Endothelial cell of umbilical vein (primary cell): ENCODE measurements at regions of chr5 and their contacts with region 1.

Region 1: GRCh38 chr5:169980418-169981053 is at the start of gene INSYN2B:
- DNase-seq: peak; percentile 96
- H3K4me3 ChIP-seq: peak within 1 kb of the TSS; percentile 47 to 99 (median 97)
- H3K27ac ChIP-seq: peak within 1 kb of the TSS; percentile 97
- H3K4me1 ChIP-seq: peaks cover 41% of the 10 kb centered on the region
- H3K27me3 ChIP-seq: no peaks in the 10 kb centered on the region
- CTCF ChIP-seq: peak; percentile 65 to 66
- POLR2A ChIP-seq: peak; percentile 59
- total RNA-seq, gene INSYN2B: 8.2 and 9.9 TPM in 2 replicates

Region 2: DNA sequence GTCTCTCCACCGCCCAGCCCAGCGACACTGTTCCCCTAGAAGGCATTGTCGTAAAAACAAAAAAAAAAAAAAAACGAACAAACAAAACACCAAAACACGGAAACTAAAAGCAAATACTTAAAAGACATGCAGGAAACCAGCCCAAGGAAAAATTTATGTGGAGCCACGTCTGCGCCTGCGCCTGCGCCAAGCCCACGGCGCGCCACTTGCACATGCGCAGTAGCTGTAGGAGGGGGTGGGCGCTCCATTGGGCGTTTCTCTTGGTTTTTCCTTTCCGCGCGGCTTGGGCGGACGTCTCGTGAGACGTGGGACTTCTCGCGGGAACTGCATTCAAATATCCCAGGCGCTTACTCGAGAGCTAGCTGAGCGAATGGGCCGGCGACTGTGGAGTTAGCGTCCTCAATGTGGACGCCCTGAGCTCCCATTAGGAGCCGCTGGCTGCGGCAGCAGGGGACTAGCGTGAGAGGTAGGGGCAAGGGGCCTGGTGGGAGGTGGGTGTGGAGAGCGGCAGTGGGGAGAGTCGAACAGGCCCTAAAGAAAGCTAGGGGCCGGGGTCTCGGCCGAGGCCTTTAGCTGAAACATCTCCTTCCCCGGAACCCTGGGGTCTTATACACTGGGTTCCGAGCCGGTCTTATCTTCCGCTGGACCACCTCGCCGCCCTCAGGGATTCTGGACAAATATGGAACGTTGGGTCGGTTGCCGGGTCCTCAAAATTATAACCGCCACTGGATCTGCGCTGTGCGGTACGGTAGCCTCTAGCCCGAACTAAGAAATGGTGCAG is 396.9 kb before region 1 on chr5 and contains the start of gene SPDL1:
- CTCF ChIA-PET with region 1: interaction called, 33 read pairs
- POLR2A ChIA-PET with region 1: interaction called, 10 read pairs
- dilution Hi-C with region 1: no loop called
- intact Hi-C with region 1: loop called (anchors 1 kb)
- DNase-seq: peak; percentile 98
- H3K4me3 ChIP-seq: peak within 1 kb of the TSS; percentile 48 to 96 (median 92)
- H3K27ac ChIP-seq: peak within 1 kb of the TSS; percentile 52
- H3K4me1 ChIP-seq: peaks cover 24% of the 10 kb centered on the region
- H3K27me3 ChIP-seq: peaks cover 0 to 4% of the 10 kb centered on the region in 2 experiments
- CTCF ChIP-seq: no peak
- POLR2A ChIP-seq: peak; percentile 92
- total RNA-seq, gene SPDL1: 46.8 and 51.8 TPM in 2 replicates

Region 3: DNA sequence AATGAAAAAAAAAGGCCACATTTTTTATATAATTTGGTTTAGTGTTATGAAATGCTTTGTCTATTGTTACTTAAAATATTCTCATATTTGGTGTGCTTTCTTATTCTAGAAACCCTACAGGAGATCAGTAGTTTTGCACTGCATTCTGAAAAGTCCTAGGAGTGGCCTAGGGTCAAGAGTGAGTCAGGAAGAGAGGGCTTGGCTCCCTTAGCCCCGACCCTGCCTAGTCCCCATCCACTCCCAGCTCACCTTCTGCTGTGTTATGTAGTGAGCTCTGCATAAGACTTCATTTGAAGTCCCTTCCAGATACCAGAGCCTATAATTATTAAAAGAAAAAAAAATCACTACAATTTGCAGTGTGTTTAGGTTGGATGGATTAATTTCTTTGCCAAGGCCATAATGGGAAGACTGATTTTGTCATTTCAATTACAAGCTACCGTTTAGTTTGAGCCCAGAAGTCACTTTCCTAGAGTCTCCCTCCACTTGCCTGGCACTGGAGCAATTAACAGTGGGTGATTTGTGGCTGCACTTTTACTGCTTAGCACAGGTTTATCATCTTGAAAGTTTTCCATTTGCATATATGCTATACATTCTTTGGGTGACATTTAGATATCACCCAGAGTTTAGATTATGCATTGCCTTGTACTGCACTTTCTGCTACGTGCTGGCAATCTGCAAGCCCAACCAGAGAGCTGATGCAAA is 143.6 kb before region 1 on chr5:
- CTCF ChIA-PET with region 1: interaction called, 17 read pairs
- POLR2A ChIA-PET with region 1: no interaction called
- dilution Hi-C with region 1: no loop called
- intact Hi-C with region 1: no loop called
- DNase-seq: no peak
- H3K4me3 ChIP-seq: no peak overlapping the region
- H3K27ac ChIP-seq: no peak overlapping the region
- H3K4me1 ChIP-seq: no peaks in the 10 kb centered on the region
- H3K27me3 ChIP-seq: peaks cover 0 to 1% of the 10 kb centered on the region in 2 experiments
- CTCF ChIP-seq: no peak
- POLR2A ChIP-seq: no peak

Region 4: DNA sequence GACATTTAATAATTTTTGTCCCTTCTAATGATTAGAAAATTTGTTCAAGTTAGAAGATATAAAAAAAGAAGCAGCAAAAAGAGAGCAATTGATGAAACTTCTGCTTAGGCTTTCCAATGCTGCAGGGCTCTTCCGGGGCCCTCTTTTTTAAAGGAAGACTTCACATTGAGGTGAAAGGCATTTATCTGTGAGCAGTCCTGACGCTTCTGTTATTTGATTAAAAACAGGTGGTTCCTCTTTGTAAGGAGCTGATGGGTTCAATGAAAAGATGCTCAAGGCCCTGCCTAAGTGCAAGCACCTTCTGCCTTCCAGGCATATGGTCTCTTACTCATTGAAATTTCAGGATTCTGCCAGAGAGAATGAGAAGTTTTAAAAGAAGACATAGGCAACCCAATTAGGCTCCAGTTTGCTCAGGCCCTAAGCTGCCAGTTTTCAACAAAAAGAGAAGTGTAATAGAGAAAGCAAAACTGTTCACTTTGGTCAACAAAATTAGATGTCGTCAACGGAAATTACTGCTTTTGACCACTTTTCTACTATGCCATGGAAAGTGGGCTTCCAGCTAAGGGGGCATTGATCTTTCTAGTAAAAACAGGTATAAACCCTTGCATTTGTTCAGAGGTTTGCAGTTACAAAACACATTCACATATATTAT is 100.4 kb before region 1 on chr5:
- CTCF ChIA-PET with region 1: interaction called, 13 read pairs
- POLR2A ChIA-PET with region 1: no interaction called
- dilution Hi-C with region 1: no loop called
- intact Hi-C with region 1: no loop called
- DNase-seq: no peak
- H3K4me3 ChIP-seq: no peak overlapping the region
- H3K27ac ChIP-seq: no peak overlapping the region
- H3K4me1 ChIP-seq: no peaks in the 10 kb centered on the region
- H3K27me3 ChIP-seq: no peaks in the 10 kb centered on the region
- CTCF ChIP-seq: no peak
- POLR2A ChIP-seq: no peak

Region 5: DNA sequence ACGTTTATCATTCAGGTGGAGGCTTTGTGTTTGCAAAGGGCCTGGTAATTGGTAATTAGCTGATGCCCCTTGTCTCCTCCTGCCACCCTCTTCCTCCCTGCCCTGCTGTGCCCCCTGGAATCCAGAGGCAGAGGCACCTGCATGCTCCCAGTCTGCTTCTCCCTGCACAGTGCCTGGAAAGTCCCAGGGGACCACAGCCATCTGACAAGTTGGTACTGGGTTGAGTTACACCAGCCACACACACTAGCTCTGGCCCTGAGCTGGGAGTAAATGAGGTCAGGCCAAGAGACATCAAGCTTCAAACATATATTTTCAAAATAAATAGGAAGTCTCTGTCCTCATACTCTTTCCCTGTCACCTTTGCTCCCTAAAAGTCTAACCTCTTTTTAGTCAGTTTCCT is 56.5 kb before region 1 on chr5:
- CTCF ChIA-PET with region 1: interaction called, 19 read pairs
- POLR2A ChIA-PET with region 1: no interaction called
- dilution Hi-C with region 1: no loop called
- intact Hi-C with region 1: no loop called
- DNase-seq: no peak
- H3K4me3 ChIP-seq: no peak overlapping the region
- H3K27ac ChIP-seq: no peak overlapping the region
- H3K4me1 ChIP-seq: peaks cover 16% of the 10 kb centered on the region
- H3K27me3 ChIP-seq: no peaks in the 10 kb centered on the region
- CTCF ChIP-seq: no peak
- POLR2A ChIP-seq: no peak

Region 6: GRCh38 chr5:169964246-169964645 is 16.3 kb before region 1 on chr5:
- CTCF ChIA-PET with region 1: interaction called, 15 read pairs
- POLR2A ChIA-PET with region 1: no interaction called
- dilution Hi-C with region 1: no loop called
- intact Hi-C with region 1: no loop called
- DNase-seq: no peak
- H3K4me3 ChIP-seq: no peak overlapping the region
- H3K27ac ChIP-seq: no peak overlapping the region
- H3K4me1 ChIP-seq: peaks cover 2% of the 10 kb centered on the region
- H3K27me3 ChIP-seq: no peaks in the 10 kb centered on the region
- CTCF ChIP-seq: no peak
- POLR2A ChIP-seq: no peak

Region 7: DNA sequence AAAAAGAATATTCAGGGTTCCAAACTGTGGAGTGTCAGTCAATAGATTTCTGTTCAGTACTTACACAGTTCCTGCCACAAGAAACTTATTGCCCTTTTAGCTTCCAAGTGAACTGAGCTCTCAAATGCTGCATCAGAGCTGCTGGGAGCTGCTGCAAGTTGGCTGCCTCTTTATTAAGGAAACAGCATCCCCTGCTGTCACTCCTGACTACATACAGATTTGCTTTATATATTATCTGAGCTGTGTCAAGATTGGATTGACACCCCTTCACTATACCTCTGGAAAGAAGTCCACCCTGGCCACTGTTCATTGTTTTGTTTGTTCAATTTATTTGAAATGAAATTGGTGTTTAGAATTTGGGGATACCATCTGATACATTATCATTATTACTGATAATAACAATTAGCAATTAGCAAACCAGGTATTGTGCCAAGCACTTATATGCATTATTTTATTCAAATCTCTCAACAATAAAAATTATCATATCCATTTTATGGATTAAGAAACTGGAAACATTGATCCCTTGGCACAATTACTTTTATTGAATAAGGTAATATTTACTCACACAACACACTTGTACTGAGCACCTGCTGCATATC is 235.8 kb after region 1 on chr5:
- CTCF ChIA-PET with region 1: interaction called, 29 read pairs
- POLR2A ChIA-PET with region 1: no interaction called
- dilution Hi-C with region 1: no loop called
- intact Hi-C with region 1: loop called (anchors 1 kb)
- DNase-seq: peak; percentile 73
- H3K4me3 ChIP-seq: no peak overlapping the region
- H3K27ac ChIP-seq: no peak overlapping the region
- H3K4me1 ChIP-seq: peaks cover 30% of the 10 kb centered on the region
- H3K27me3 ChIP-seq: no peaks in the 10 kb centered on the region
- CTCF ChIP-seq: peak; percentile 66 to 69
- POLR2A ChIP-seq: no peak